ENCODE measurements at regions of chr9 and their contacts with region 1.

Region 1: GRCh38 chr9:127916665-127917613 is at the start of gene ST6GALNAC4:
- DNase-seq: peak; percentile 89 to 96 (median 94)
- H3K4me3 ChIP-seq: peak within 1 kb of the TSS; percentile 94
- H3K4me3 Mint-ChIP-seq: peak within 1 kb of the TSS; percentile 82 to 94 (median 89)
- H3K27ac ChIP-seq: peak within 1 kb of the TSS; percentile 81
- H3K27ac Mint-ChIP-seq: peak within 1 kb of the TSS; percentile 53 to 95 (median 93)
- H3K4me1 ChIP-seq: peaks cover 52% of the 10 kb centered on the region
- H3K4me1 Mint-ChIP-seq: peaks cover 40 to 66% (median 45%) of the 10 kb centered on the region in 3 donors
- H3K27me3 ChIP-seq: no peaks in the 10 kb centered on the region
- H3K27me3 Mint-ChIP-seq: peaks cover 0 to 7% of the 10 kb centered on the region in 2 donors
- total RNA-seq, gene ST6GALNAC4: 32.9 to 43.2 TPM

Region 2: DNA sequence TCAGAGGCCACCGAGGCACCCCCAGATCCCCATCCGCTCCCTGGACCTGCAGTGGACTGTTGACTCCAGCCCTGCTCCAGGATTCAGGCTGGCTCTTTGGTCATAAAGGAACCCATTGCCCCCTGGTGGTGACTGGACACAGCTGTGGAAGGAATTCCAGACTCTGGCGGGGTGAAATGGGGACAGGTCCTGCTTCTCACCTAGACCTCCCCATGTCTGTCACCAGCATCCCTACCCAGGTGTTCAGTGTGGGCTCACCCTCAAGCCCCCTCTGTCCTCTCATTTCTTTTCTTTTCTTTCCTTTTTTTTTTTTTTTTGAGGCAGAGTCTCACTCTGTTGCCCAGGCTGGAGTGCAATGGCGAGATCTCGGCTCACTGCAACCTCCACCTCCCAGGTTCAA is 330.4 kb before region 1 on chr9:
- CTCF ChIA-PET with region 1: interaction called, 20 read pairs
- POLR2A ChIA-PET with region 1: no interaction called
- DNase-seq: peak; percentile 32 to 76 (median 50)
- H3K4me3 ChIP-seq: no peak overlapping the region
- H3K4me3 Mint-ChIP-seq: no peak overlapping the region
- H3K27ac ChIP-seq: no peak overlapping the region
- H3K27ac Mint-ChIP-seq: no peak overlapping the region
- H3K4me1 ChIP-seq: no peaks in the 10 kb centered on the region
- H3K4me1 Mint-ChIP-seq: no peaks in the 10 kb centered on the region
- H3K27me3 ChIP-seq: no peaks in the 10 kb centered on the region
- H3K27me3 Mint-ChIP-seq: peaks cover 3 to 16% of the 10 kb centered on the region in 2 donors

Region 3: GRCh38 chr9:127770905-127771569 is 145.9 kb before region 1 on chr9:
- CTCF ChIA-PET with region 1: interaction called, 3 read pairs
- POLR2A ChIA-PET with region 1: interaction called, 13 read pairs
- DNase-seq: peak; percentile 85 to 96 (median 90)
- H3K4me3 ChIP-seq: peak overlapping the region; percentile 71
- H3K4me3 Mint-ChIP-seq: peak overlapping the region; percentile 80 to 96 (median 89)
- H3K27ac ChIP-seq: peak overlapping the region; percentile 77
- H3K27ac Mint-ChIP-seq: peak overlapping the region; percentile 86 to 99 (median 98)
- H3K4me1 ChIP-seq: peaks cover 73% of the 10 kb centered on the region
- H3K4me1 Mint-ChIP-seq: peaks cover 61 to 79% (median 75%) of the 10 kb centered on the region in 3 donors
- H3K27me3 ChIP-seq: no peaks in the 10 kb centered on the region
- H3K27me3 Mint-ChIP-seq: no peaks in the 10 kb centered on the region

Region 4: DNA sequence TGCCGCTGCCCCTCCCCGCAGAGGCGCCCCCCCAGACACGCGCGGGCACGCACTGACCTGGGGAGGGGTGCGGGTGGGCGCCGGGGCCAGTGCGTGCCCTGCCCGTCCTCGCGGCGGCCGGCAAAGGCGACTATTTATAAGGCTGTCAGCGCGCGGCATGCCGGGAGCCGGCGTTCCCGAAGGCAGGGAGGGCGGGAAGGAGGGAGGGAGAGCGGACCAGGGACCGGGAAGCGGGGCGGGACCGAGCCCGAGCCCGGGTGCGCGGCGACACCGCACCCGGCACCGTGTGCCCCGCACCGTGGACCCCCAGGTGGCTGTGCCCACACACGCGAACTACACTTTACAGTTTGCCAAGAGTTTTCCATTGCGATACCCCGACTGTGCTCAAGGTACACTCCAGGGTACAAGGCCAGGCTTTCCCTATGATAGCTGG is 39.4 kb before region 1 on chr9 and contains the start of gene AK1:
- CTCF ChIA-PET with region 1: interaction called, 12 read pairs
- POLR2A ChIA-PET with region 1: interaction called, 3 read pairs
- DNase-seq: no peak
- H3K4me3 ChIP-seq: no peak within 1 kb of the TSS
- H3K4me3 Mint-ChIP-seq: peak within 1 kb of the TSS in 4 of 7 donors; percentile 26 to 51 (median 38)
- H3K27ac ChIP-seq: no peak within 1 kb of the TSS
- H3K27ac Mint-ChIP-seq: peak within 1 kb of the TSS in 1 of 8 donors; percentile 88
- H3K4me1 ChIP-seq: peaks cover 5% of the 10 kb centered on the region
- H3K4me1 Mint-ChIP-seq: peaks cover 2 to 17% (median 4%) of the 10 kb centered on the region in 3 donors
- H3K27me3 ChIP-seq: no peaks in the 10 kb centered on the region
- H3K27me3 Mint-ChIP-seq: peaks cover 0 to 5% of the 10 kb centered on the region in 2 donors
- total RNA-seq, gene AK1: 15.8 to 20.0 TPM

Region 5: GRCh38 chr9:127905004-127905728 is 11.8 kb before region 1 on chr9:
- CTCF ChIA-PET with region 1: interaction called, 20 read pairs
- POLR2A ChIA-PET with region 1: interaction called, 14 read pairs
- DNase-seq: peak; percentile 59 to 81 (median 73)
- H3K4me3 ChIP-seq: peak overlapping the region; percentile 65
- H3K4me3 Mint-ChIP-seq: peak overlapping the region; percentile 88 to 99 (median 93)
- H3K27ac ChIP-seq: peak overlapping the region; percentile 85
- H3K27ac Mint-ChIP-seq: peak overlapping the region; percentile 96 to 100 (median 100)
- H3K4me1 ChIP-seq: peaks cover 45% of the 10 kb centered on the region
- H3K4me1 Mint-ChIP-seq: peaks cover 45 to 54% (median 48%) of the 10 kb centered on the region in 3 donors
- H3K27me3 ChIP-seq: no peaks in the 10 kb centered on the region
- H3K27me3 Mint-ChIP-seq: peaks cover 0 to 3% of the 10 kb centered on the region in 2 donors

Region 6: DNA sequence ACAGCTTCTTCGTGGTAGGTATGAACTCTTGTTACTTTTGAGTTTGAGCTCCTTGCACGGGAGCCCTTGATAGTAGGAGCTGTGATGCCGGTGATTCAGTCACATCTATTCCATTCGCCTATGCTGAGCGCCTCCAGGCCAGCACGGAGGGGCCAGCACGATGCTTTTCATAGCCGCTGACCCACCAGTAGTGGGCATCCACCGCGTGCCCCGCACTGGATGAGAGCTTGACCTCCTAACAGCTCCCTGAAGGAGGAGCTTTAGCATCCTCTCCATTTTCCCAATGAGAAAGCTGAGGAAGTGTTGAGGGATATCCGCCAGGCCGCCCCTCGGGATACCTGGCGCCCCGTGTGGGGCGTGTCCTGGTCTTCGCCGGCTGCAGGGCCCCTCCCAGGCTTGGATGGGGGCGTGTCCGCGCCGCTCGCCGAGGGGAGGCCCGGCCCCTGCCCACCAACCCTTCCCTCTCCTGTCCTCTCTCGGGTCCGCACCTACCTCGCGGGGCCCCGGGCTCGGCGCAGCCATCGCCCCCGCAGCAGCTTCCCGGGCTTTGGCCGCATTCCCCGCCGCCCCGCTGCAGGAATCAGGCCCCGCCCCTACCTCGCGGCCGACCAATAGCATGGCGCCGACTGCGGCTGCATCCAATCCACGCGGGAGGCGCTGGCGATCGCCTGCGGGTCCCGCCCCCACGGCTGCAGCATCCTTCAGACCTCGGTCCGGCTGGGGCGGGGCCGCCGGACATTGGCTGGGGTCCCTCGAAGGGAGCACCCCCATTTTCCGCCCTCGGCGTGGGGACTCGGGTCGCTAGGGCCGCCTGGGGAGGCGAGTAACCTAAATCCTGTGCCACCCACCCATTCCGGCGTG is 13.5 kb after region 1 on chr9 and contains the start of gene PIP5KL1:
- CTCF ChIA-PET with region 1: interaction called, 16 read pairs
- POLR2A ChIA-PET with region 1: interaction called, 4 read pairs
- DNase-seq: peak; percentile 65 to 80 (median 71)
- H3K4me3 ChIP-seq: peak within 1 kb of the TSS; percentile 69
- H3K4me3 Mint-ChIP-seq: peak within 1 kb of the TSS; percentile 69 to 91 (median 77)
- H3K27ac ChIP-seq: peak within 1 kb of the TSS; percentile 41
- H3K27ac Mint-ChIP-seq: peak within 1 kb of the TSS; percentile 29 to 80 (median 60)
- H3K4me1 ChIP-seq: peaks cover 43% of the 10 kb centered on the region
- H3K4me1 Mint-ChIP-seq: peaks cover 18 to 64% (median 28%) of the 10 kb centered on the region in 3 donors
- H3K27me3 ChIP-seq: no peaks in the 10 kb centered on the region
- H3K27me3 Mint-ChIP-seq: peaks cover 0 to 4% of the 10 kb centered on the region in 2 donors
- total RNA-seq, gene PIP5KL1: 1.4 to 2.5 TPM

Region 7: GRCh38 chr9:127970401-127971313 is 53.7 kb after region 1 on chr9:
- CTCF ChIA-PET with region 1: no interaction called
- POLR2A ChIA-PET with region 1: no interaction called
- DNase-seq: peak; percentile 36 to 84 (median 75)
- H3K4me3 ChIP-seq: peak overlapping the region; percentile 70
- H3K4me3 Mint-ChIP-seq: peak overlapping the region; percentile 85 to 99 (median 95)
- H3K27ac ChIP-seq: peak overlapping the region; percentile 55
- H3K27ac Mint-ChIP-seq: peak overlapping the region; percentile 87 to 100 (median 98)
- H3K4me1 ChIP-seq: peaks cover 99% of the 10 kb centered on the region
- H3K4me1 Mint-ChIP-seq: peaks cover 95 to 100% (median 100%) of the 10 kb centered on the region in 3 donors
- H3K27me3 ChIP-seq: no peaks in the 10 kb centered on the region
- H3K27me3 Mint-ChIP-seq: peaks cover 0 to 2% of the 10 kb centered on the region in 2 donors

Measured in CD8-positive, alpha-beta memory T cell (primary cell).